Naive thymus-derived CD4-positive, alpha-beta T cell (primary cell): ENCODE measurements at regions of chr17 and their contacts with region 1.

Region 1: DNA sequence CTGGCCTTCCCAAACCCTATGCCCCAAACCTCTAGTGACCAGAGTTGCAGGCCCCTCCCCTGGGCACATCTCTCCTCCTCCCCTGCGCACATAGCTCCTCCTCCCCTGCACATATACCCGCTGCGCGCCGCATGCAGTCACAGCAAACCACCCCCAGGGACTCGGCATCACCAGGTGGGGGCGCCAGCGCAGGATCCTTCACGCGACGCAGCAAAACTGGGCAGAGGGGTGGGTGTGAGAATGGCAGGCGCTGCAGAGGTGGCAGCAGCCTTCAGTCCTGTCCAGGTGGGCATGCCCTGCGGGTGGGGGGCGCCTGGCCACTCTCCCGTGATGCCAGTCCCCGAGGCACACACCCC is 5.6 kb downstream of the CORO6 start:
- DNase-seq: peak; percentile 77 to 91 (median 88)
- ATAC-seq: peak; percentile 80
- H3K4me3 ChIP-seq: peak overlapping the region; percentile 80
- H3K4me3 Mint-ChIP-seq: peak overlapping the region; percentile 78 to 93 (median 88)
- H3K27ac ChIP-seq: peak overlapping the region; percentile 38
- H3K27ac Mint-ChIP-seq: peak overlapping the region in 7 of 9 donors; percentile 2 to 91 (median 72)
- H3K4me1 ChIP-seq: peaks cover 36 to 42% of the 10 kb centered on the region in 2 donors
- H3K4me1 Mint-ChIP-seq: peaks cover 13 to 55% (median 38%) of the 10 kb centered on the region in 7 donors
- H3K27me3 ChIP-seq: no peaks in the 10 kb centered on the region
- H3K27me3 Mint-ChIP-seq: peaks cover 0 to 21% (median 0%) of the 10 kb centered on the region in 5 donors

Region 2: GRCh38 chr17:29389982-29390850 is 226.9 kb before region 1 on chr17 and contains the start of gene TAOK1:
- CTCF ChIA-PET with region 1: no interaction called
- POLR2A ChIA-PET with region 1: interaction called, 3 read pairs
- intact Hi-C with region 1: loop called in 1 of 2 experiments (anchors 1 kb)
- DNase-seq: peak; percentile 93 to 98 (median 96)
- ATAC-seq: peak; percentile 97
- H3K4me3 ChIP-seq: peak within 1 kb of the TSS; percentile 94
- H3K4me3 Mint-ChIP-seq: peak within 1 kb of the TSS; percentile 95 to 99 (median 98)
- H3K27ac ChIP-seq: peak within 1 kb of the TSS; percentile 98
- H3K27ac Mint-ChIP-seq: peak within 1 kb of the TSS; percentile 92 to 98 (median 97)
- H3K4me1 ChIP-seq: peaks cover 14 to 25% of the 10 kb centered on the region in 2 donors
- H3K4me1 Mint-ChIP-seq: peaks cover 36 to 49% (median 44%) of the 10 kb centered on the region in 7 donors
- H3K27me3 ChIP-seq: no peaks in the 10 kb centered on the region
- H3K27me3 Mint-ChIP-seq: peaks cover 0 to 2% (median 0%) of the 10 kb centered on the region in 5 donors
- total RNA-seq, gene TAOK1: 62.4 to 70.1 (median 66.5) TPM

Region 3: DNA sequence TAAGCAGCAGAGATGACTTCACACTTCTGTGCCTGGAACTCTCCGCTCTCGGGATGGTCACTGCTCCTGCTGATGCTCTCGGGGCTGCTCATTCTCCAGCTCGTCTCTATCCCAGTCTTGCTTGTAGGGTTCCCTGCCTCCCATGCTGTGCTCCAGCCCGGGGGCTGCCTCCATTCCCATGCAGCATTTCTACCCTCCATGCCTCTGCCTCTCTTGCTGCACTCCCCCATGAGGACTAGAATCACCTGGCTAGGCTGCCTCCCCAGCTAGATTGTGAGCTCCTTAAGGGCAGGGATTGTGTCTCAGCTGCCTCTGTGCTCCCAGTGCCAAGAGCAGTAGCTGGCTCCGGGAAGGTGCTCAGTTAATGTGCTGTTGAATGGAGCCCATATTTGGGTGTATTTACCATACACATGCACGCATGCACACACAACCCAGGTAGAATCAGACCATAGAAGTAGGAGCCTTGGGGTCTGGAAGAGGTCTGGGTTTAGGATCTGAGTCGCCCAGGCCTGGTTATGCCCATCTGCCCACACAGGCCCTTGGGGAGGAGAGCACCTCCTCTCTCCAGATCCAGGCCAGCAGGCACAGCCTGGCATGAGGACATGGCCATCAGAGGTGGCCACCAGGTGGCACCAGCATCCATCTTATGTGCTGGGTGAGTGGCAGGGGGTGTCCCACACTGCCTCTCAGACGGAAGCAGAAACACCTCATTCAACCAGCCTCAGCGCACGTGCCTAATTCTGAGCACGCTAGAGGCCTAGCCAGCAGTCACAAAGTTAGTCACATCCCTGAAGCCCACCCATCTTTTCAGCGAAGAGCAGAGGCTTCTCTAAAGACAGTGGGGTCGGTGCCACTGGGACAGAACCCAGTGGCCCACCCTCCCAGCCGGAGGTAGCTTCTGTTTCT is 37.0 kb before region 1 on chr17:
- CTCF ChIA-PET with region 1: interaction called, 28 read pairs
- POLR2A ChIA-PET with region 1: interaction called, 59 read pairs
- intact Hi-C with region 1: loop called (anchors 1 kb)
- DNase-seq: peak; percentile 79 to 90 (median 87)
- ATAC-seq: peak; percentile 99
- H3K4me3 ChIP-seq: no peak overlapping the region
- H3K4me3 Mint-ChIP-seq: peak overlapping the region in 2 of 10 donors; percentile 2 to 32
- H3K27ac ChIP-seq: peak overlapping the region; percentile 53
- H3K27ac Mint-ChIP-seq: peak overlapping the region; percentile 7 to 96 (median 81)
- H3K4me1 ChIP-seq: peaks cover 2 to 17% of the 10 kb centered on the region in 2 donors
- H3K4me1 Mint-ChIP-seq: peaks cover 21 to 24% (median 22%) of the 10 kb centered on the region in 7 donors
- H3K27me3 ChIP-seq: no peaks in the 10 kb centered on the region
- H3K27me3 Mint-ChIP-seq: no peaks in the 10 kb centered on the region

Region 4: GRCh38 chr17:29597361-29598172 is 19.5 kb before region 1 on chr17:
- CTCF ChIA-PET with region 1: interaction called, 56 read pairs
- POLR2A ChIA-PET with region 1: interaction called, 59 read pairs
- intact Hi-C with region 1: loop called in 1 of 2 experiments (anchors 1 kb)
- DNase-seq: no peak
- ATAC-seq: no peak
- H3K4me3 ChIP-seq: no peak overlapping the region
- H3K4me3 Mint-ChIP-seq: no peak overlapping the region
- H3K27ac ChIP-seq: no peak overlapping the region
- H3K27ac Mint-ChIP-seq: no peak overlapping the region
- H3K4me1 ChIP-seq: peaks cover 7 to 8% of the 10 kb centered on the region in 2 donors
- H3K4me1 Mint-ChIP-seq: peaks cover 0 to 9% (median 3%) of the 10 kb centered on the region in 7 donors
- H3K27me3 ChIP-seq: no peaks in the 10 kb centered on the region
- H3K27me3 Mint-ChIP-seq: peaks cover 0 to 2% (median 0%) of the 10 kb centered on the region in 5 donors

Region 5: DNA sequence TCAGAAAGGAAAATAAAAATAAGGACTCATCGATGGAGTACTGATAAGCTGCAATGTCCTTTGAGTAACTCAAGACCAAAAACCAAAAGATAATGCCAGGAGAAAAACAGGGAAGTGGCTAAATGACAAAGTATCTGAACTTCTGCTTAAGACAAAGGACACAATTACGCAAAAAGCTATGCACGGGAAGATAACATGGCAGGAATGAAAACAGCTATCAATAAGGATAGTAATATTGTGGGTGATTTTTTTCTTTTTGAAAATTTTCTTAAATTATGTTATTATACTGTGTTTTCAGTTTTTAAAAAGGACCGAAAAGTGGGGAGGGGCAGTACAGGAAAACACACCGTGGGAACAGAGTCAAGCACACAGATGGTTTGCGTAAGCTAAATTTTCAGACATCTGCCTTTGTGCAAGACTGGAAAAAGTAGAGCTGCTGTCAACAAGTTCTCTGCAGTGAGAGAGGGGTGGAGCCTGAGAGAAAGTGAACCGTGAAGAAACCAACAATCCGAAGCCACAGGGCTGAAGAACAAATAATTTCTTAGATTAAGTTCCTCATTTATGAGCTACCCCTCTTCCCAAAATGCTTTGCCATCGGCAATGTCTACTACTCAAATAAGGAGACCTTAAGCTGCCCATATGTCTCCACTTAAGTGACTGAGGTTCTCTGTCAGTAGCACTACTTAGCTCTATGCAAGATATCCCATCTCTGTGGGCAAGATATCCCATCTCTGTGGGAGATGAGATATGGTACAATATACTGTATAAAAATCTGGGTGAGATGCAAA is 105.5 kb after region 1 on chr17:
- CTCF ChIA-PET with region 1: interaction called, 3 read pairs
- POLR2A ChIA-PET with region 1: interaction called, 21 read pairs
- intact Hi-C with region 1: no loop called
- DNase-seq: peak in 7 of 9 donors; percentile 69 to 85 (median 80)
- ATAC-seq: peak; percentile 84
- H3K4me3 ChIP-seq: peak overlapping the region; percentile 32
- H3K4me3 Mint-ChIP-seq: peak overlapping the region; percentile 55 to 92 (median 72)
- H3K27ac ChIP-seq: peak overlapping the region; percentile 72
- H3K27ac Mint-ChIP-seq: peak overlapping the region; percentile 21 to 98 (median 92)
- H3K4me1 ChIP-seq: peaks cover 56 to 74% of the 10 kb centered on the region in 2 donors
- H3K4me1 Mint-ChIP-seq: peaks cover 55 to 94% (median 85%) of the 10 kb centered on the region in 7 donors
- H3K27me3 ChIP-seq: no peaks in the 10 kb centered on the region
- H3K27me3 Mint-ChIP-seq: no peaks in the 10 kb centered on the region

Region 6: DNA sequence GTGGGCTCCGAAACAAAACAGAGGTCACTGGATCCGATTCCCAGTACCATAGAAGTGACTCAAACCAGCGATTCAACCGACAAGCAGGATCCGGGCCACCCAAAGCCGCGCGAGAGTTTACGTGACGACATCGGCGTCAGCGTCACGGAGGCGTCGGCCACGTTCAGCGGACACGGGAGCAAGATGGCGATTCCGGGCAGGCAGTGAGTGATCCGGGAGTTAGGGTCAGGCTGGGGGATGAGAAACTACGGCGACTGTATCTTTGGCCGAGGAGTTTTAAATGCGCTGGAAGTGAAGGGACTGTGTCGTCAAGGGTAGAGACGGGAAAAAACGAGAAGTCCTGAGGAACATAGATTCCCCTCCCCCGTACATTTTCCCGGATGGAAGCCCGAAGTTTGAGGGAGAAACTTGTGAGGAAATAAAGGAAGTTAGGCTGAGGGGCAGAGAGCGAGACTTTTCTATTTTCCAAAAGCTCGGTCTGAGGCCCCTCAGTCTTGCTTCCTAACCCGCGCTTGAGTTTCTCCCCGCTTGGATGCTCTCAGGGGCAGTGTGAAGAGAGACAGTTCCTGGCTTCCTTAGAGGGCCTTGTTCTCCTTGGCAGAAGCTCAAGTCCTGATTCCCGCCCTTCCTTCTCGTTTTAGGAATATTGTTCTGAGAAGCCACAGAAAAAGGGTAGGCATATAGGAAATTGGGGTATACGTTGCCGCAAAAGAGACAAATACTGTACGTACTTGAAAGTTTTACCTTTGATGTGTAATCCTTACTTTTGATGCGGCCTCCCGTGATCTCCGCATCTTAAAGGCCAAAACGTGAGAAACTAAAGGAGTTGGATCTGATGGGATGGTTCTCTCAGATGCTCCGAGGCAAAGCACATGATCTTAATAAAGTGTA is 499.8 kb after region 1 on chr17 and contains the start of gene NSRP1:
- CTCF ChIA-PET with region 1: no interaction called
- POLR2A ChIA-PET with region 1: no interaction called
- intact Hi-C with region 1: loop called in 1 of 2 experiments (anchors 10 kb)
- DNase-seq: peak; percentile 82 to 93 (median 90)
- ATAC-seq: peak; percentile 99
- H3K4me3 ChIP-seq: peak within 1 kb of the TSS; percentile 96
- H3K4me3 Mint-ChIP-seq: peak within 1 kb of the TSS; percentile 91 to 100 (median 98)
- H3K27ac ChIP-seq: peak within 1 kb of the TSS; percentile 97
- H3K27ac Mint-ChIP-seq: peak within 1 kb of the TSS; percentile 97 to 100 (median 100)
- H3K4me1 ChIP-seq: peaks cover 3 to 10% of the 10 kb centered on the region in 2 donors
- H3K4me1 Mint-ChIP-seq: peaks cover 20 to 57% (median 48%) of the 10 kb centered on the region in 7 donors
- H3K27me3 ChIP-seq: no peaks in the 10 kb centered on the region
- H3K27me3 Mint-ChIP-seq: no peaks in the 10 kb centered on the region
- total RNA-seq, gene NSRP1: 25.6 to 34.7 (median 29.3) TPM